Activated CD4-positive, alpha-beta T cell treated with anti-CD3 and anti-CD28 coated beads for 36 hours (primary cell): ENCODE measurements at regions of chr11 and their contacts with region 1.

Region 1: GRCh38 chr11:9280655-9281301 is 15.6 kb upstream of the DENND5A start:
- DNase-seq: peak; percentile 73
- ATAC-seq: peak; percentile 95
- H3K4me3 Mint-ChIP-seq: no peak overlapping the region
- H3K27ac Mint-ChIP-seq: no peak overlapping the region
- H3K4me1 Mint-ChIP-seq: peaks cover 14% of the 10 kb centered on the region
- H3K27me3 Mint-ChIP-seq: no peaks in the 10 kb centered on the region

Region 2: GRCh38 chr11:8484251-8484650 is 796.5 kb before region 1 on chr11:
- CTCF ChIA-PET with region 1: no interaction called
- POLR2A ChIA-PET with region 1: no interaction called
- intact Hi-C with region 1: no loop called
- DNase-seq: no peak
- ATAC-seq: no peak
- H3K4me3 Mint-ChIP-seq: no peak overlapping the region
- H3K27ac Mint-ChIP-seq: no peak overlapping the region
- H3K4me1 Mint-ChIP-seq: no peaks in the 10 kb centered on the region
- H3K27me3 Mint-ChIP-seq: no peaks in the 10 kb centered on the region

Region 3: DNA sequence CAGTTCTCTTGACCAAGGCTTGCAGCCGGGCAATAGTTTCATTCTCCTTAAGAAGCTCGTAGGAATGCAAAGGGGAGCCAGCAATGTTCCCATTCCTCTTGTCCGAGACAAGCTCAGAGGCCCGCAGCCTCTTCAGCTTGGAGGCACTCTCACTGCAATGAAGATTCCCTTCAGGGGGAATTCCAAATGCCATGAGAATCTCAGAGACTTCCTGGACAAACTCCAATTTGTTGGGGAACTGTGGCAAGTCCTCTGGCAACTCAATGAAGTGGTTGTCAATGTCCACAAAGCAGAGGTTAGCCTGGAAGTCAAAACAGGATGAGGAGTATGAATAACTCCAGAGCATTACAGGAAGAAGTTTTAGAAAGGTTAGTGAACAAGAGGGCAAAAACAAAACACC is 100.0 kb before region 1 on chr11:
- CTCF ChIA-PET with region 1: no interaction called
- POLR2A ChIA-PET with region 1: no interaction called
- intact Hi-C with region 1: no loop called
- DNase-seq: no peak
- ATAC-seq: no peak
- H3K4me3 Mint-ChIP-seq: no peak overlapping the region
- H3K27ac Mint-ChIP-seq: no peak overlapping the region
- H3K4me1 Mint-ChIP-seq: peaks cover 11% of the 10 kb centered on the region
- H3K27me3 Mint-ChIP-seq: no peaks in the 10 kb centered on the region

Region 4: DNA sequence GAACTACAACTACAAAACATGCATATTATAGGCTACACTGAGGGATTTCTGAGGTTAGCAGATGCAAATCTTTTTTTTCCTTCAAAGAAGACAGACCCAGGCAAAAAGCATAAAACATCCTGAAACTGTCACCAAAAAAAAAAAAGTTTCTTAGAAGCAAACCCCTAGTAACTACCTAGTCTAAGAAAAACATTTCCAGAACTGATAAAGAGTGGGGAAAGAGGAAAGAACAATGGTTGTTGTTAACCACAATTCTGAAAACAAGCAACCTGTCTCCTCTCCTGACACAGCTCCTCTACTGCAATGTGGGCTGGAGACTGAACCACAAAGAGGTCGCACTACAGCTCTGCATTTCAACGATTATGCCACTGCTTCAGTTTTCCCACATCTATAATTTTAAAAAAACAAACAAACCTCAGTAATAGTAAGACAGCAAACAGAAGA is 30.6 kb before region 1 on chr11:
- CTCF ChIA-PET with region 1: interaction called, 4 read pairs
- POLR2A ChIA-PET with region 1: no interaction called
- intact Hi-C with region 1: loop called in 1 of 2 experiments (anchors 1 kb)
- DNase-seq: peak; percentile 50
- ATAC-seq: peak; percentile 72
- H3K4me3 Mint-ChIP-seq: peak overlapping the region; percentile 18
- H3K27ac Mint-ChIP-seq: peak overlapping the region; percentile 42
- H3K4me1 Mint-ChIP-seq: peaks cover 69% of the 10 kb centered on the region
- H3K27me3 Mint-ChIP-seq: no peaks in the 10 kb centered on the region